Activated T-helper 2 cell treated with anti-CD3 and anti-CD28 coated beads, Interferon-gamma antibody, Interleukin-2, Interleukin-4, amounts not matched to agents 10 μg/mL and 5 μg/mL and 100 μg/mL, durations not matched to agents 14 hours and 24 hours and 36 hours (primary cell): ENCODE measurements at regions of chr1 and their contacts with region 1.

Region 1: DNA sequence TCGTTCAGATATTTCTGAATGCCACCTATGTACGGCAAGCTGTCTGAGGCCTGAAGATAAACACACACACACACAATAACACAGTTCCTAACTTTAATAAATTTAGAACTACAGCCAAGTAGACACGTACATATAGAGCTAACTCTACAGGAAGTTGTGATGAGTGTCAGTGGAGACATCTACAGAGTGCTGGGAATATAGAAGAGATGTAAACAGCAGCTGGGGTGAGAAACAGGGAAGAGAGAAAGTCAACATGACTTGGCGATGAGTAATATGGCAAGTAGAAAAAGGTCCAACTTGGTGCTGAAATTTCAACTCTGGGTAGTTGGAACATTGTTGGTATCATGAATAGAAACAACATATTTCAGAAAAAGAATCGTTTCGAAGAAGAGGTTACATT is 206.5 kb downstream of the ZP4 start:
- DNase-seq: no peak
- H3K4me3 Mint-ChIP-seq: no peak overlapping the region
- H3K27ac Mint-ChIP-seq: no peak overlapping the region
- H3K4me1 Mint-ChIP-seq: no peaks in the 10 kb centered on the region
- H3K27me3 Mint-ChIP-seq: no peaks in the 10 kb centered on the region

Region 2: GRCh38 chr1:237269938-237270337 is 414.3 kb before region 1 on chr1:
- intact Hi-C with region 1: no loop called
- DNase-seq: no peak
- H3K4me3 Mint-ChIP-seq: peak overlapping the region; percentile 75
- H3K27ac Mint-ChIP-seq: peak overlapping the region; percentile 84
- H3K4me1 Mint-ChIP-seq: peaks cover 37% of the 10 kb centered on the region
- H3K27me3 Mint-ChIP-seq: no peaks in the 10 kb centered on the region

Region 3: DNA sequence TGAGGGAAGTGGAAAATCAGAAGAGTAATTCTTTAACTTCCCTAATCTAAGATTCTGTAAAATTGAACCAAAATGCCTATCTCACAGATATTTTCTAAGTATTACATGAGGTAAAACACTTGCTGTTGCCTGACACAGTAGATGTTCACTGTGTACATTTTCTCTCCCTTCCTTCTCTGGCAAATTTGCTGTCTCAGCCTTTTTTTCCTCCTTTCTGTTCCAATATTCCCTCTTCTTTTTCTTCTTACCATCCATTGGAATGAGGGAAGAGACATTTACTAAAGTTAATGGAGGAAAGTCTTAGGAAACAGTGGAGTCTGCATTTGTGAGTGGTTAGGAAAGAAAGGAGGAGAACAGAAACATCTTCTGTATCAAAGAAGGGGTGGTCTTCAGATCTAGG is 33.4 kb before region 1 on chr1:
- intact Hi-C with region 1: no loop called
- DNase-seq: no peak
- H3K4me3 Mint-ChIP-seq: no peak overlapping the region
- H3K27ac Mint-ChIP-seq: no peak overlapping the region
- H3K4me1 Mint-ChIP-seq: no peaks in the 10 kb centered on the region
- H3K27me3 Mint-ChIP-seq: no peaks in the 10 kb centered on the region

Region 4: GRCh38 chr1:237701534-237701933 is 17.3 kb after region 1 on chr1:
- intact Hi-C with region 1: no loop called
- DNase-seq: no peak
- H3K4me3 Mint-ChIP-seq: no peak overlapping the region
- H3K27ac Mint-ChIP-seq: no peak overlapping the region
- H3K4me1 Mint-ChIP-seq: no peaks in the 10 kb centered on the region
- H3K27me3 Mint-ChIP-seq: no peaks in the 10 kb centered on the region

Region 5: DNA sequence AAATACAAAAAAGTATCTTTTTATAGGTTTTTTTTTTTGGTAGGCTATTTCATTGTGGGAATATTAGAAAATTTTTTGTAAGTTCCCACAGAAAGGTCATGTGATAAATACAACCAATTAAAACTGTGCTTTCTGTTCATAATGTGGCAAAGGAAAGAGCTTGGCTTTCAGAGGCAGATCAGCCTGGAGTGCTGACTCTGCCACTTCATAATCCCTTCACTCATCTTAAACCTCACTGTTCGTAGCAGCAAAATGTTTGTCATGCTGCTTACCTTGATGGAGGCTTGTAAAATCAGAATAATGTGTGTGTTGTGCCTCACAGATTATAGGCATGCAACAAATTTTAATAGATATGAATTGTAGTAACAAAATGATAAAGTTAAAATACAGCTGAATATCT is 29.7 kb after region 1 on chr1:
- intact Hi-C with region 1: no loop called
- DNase-seq: no peak
- H3K4me3 Mint-ChIP-seq: no peak overlapping the region
- H3K27ac Mint-ChIP-seq: no peak overlapping the region
- H3K4me1 Mint-ChIP-seq: no peaks in the 10 kb centered on the region
- H3K27me3 Mint-ChIP-seq: no peaks in the 10 kb centered on the region

Region 6: GRCh38 chr1:237799762-237800474 is 115.7 kb after region 1 on chr1:
- intact Hi-C with region 1: loop called (anchors 10 kb)
- DNase-seq: peak; percentile 14
- H3K4me3 Mint-ChIP-seq: no peak overlapping the region
- H3K27ac Mint-ChIP-seq: no peak overlapping the region
- H3K4me1 Mint-ChIP-seq: no peaks in the 10 kb centered on the region
- H3K27me3 Mint-ChIP-seq: no peaks in the 10 kb centered on the region